CD8-positive, alpha-beta T cell (primary cell): ENCODE measurements at regions of chr4 and their contacts with region 1.

Region 1: GRCh38 chr4:36325499-36325898 is 44.1 kb downstream of the DTHD1 start:
- DNase-seq: peak in 2 of 9 experiments; percentile 60 to 75
- ATAC-seq: no peak
- H3K4me3 ChIP-seq: no peak overlapping the region
- H3K4me3 Mint-ChIP-seq: no peak overlapping the region
- H3K27ac ChIP-seq: peak overlapping the region in 1 of 2 experiments; percentile 11
- H3K27ac Mint-ChIP-seq: peak overlapping the region; percentile 55
- H3K4me1 ChIP-seq: peaks cover 27% of the 10 kb centered on the region
- H3K4me1 Mint-ChIP-seq: peaks cover 46% of the 10 kb centered on the region
- H3K27me3 ChIP-seq: no peaks in the 10 kb centered on the region
- H3K27me3 Mint-ChIP-seq: no peaks in the 10 kb centered on the region
- CTCF ChIP-seq: no peak

Region 2: DNA sequence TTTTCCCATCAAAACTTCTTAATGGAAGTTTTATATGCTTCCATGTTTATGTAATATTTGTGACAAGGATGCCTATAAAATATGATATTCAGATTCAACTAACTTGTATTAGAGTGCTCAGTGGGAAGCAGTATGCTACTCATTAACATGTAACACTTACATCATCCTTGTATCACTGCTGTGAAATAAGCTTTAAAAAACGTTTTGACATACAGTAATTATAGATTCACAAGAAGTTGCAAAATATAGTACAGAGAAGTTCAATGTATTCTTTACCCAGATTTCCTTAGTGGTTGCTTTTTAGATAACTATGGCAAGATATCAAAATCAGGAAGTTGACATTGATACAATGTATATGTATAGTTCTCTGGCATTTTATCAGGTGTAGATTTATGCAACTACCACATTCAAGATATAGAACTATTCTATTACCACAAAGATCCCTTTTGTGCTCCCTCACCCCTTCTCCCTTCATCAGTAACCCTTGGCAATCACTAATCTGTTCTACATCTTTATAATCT is 12.2 kb after region 1 on chr4:
- CTCF ChIA-PET with region 1: interaction called, 3 read pairs
- POLR2A ChIA-PET with region 1: interaction called, 3 read pairs
- intact Hi-C with region 1: loop called (anchors 2 kb)
- DNase-seq: no peak
- ATAC-seq: no peak
- H3K4me3 ChIP-seq: no peak overlapping the region
- H3K4me3 Mint-ChIP-seq: no peak overlapping the region
- H3K27ac ChIP-seq: no peak overlapping the region
- H3K27ac Mint-ChIP-seq: no peak overlapping the region
- H3K4me1 ChIP-seq: no peaks in the 10 kb centered on the region
- H3K4me1 Mint-ChIP-seq: peaks cover 24% of the 10 kb centered on the region
- H3K27me3 ChIP-seq: no peaks in the 10 kb centered on the region
- H3K27me3 Mint-ChIP-seq: no peaks in the 10 kb centered on the region
- CTCF ChIP-seq: no peak

Region 3: GRCh38 chr4:36343501-36344175 is 18.1 kb after region 1 on chr4:
- CTCF ChIA-PET with region 1: no interaction called
- POLR2A ChIA-PET with region 1: interaction called, 3 read pairs
- intact Hi-C with region 1: loop called in 1 of 2 experiments (anchors 2 kb)
- DNase-seq: no peak
- ATAC-seq: no peak
- H3K4me3 ChIP-seq: no peak overlapping the region
- H3K4me3 Mint-ChIP-seq: no peak overlapping the region
- H3K27ac ChIP-seq: no peak overlapping the region
- H3K27ac Mint-ChIP-seq: no peak overlapping the region
- H3K4me1 ChIP-seq: no peaks in the 10 kb centered on the region
- H3K4me1 Mint-ChIP-seq: peaks cover 5% of the 10 kb centered on the region
- H3K27me3 ChIP-seq: no peaks in the 10 kb centered on the region
- H3K27me3 Mint-ChIP-seq: no peaks in the 10 kb centered on the region
- CTCF ChIP-seq: no peak

Region 4: DNA sequence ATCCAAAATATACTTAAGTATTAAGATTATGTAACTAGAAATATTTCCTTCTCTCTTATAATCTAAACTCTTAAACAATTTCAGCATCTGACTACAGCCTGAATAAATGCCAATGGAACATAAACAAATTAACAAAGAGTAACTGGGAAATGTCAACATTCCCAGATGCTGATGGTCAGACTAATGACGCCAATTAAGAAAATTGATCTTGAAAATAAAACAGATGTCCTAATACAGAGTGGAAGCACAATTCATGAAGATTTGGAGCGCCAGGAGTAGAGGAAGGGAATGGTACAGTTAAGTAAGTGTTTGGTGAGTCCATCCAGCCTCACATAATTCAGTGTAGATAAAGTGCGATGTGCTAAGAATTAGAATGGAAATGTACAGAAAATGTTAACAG is 715.3 kb after region 1 on chr4:
- CTCF ChIA-PET with region 1: no interaction called
- POLR2A ChIA-PET with region 1: no interaction called
- intact Hi-C with region 1: no loop called
- DNase-seq: no peak
- ATAC-seq: no peak
- H3K4me3 ChIP-seq: no peak overlapping the region
- H3K4me3 Mint-ChIP-seq: no peak overlapping the region
- H3K27ac ChIP-seq: no peak overlapping the region
- H3K27ac Mint-ChIP-seq: no peak overlapping the region
- H3K4me1 ChIP-seq: no peaks in the 10 kb centered on the region
- H3K4me1 Mint-ChIP-seq: no peaks in the 10 kb centered on the region
- H3K27me3 ChIP-seq: no peaks in the 10 kb centered on the region
- H3K27me3 Mint-ChIP-seq: no peaks in the 10 kb centered on the region
- CTCF ChIP-seq: no peak